ENCODE measurements at regions of chr15 and their contacts with region 1.

Region 1: DNA sequence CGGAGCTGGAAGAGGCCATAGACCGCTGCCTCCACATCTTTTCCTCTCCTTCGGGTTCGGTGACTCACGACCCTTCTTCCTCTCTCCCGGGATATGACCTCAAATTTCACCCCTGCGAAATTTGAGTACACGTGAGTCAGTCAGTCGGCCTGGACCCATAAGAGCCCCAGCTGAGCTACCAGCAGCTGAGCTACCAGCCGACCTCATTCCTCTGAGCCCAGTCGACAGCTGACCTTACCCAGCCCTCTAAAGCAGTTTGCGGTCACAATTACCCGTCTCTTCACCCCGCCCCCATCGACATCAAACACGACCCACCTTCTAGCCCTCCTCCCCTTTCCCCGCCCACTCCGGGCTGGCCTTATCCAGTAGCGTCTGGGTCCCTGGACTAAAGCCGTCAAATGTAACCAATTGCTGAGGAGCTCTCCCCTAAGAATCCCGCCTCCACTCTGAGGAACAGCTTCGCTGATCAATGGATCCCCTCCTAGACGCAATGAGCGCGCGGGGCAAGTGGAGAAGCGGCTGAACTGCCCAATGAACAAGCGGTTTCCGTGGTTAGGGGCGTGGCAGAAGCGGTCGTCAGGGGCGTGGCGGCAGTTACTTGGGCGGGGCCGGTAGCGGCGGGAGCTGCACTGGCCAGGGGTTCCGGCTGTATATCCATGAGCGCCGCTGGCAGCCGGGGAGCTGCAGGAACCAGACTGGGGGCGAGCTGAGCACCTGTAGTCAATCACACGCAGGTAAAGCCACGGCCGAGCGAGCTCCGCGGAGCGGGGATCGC is at the start of gene ABHD2:
- DNase-seq: peak; percentile 98 to 99
- H3K4me3 ChIP-seq: peak within 1 kb of the TSS; percentile 79
- H3K27ac ChIP-seq: peak within 1 kb of the TSS; percentile 63
- H3K4me1 ChIP-seq: peaks cover 43% of the 10 kb centered on the region
- H3K27me3 ChIP-seq: no peaks in the 10 kb centered on the region
- CTCF ChIP-seq: no peak
- total RNA-seq, gene ABHD2: 86.8 and 148 TPM in 2 replicates

Region 2: GRCh38 chr15:88904624-88905327 is 183.2 kb before region 1 on chr15:
- CTCF ChIA-PET with region 1: no interaction called
- POLR2A ChIA-PET with region 1: no interaction called
- intact Hi-C with region 1: no loop called
- DNase-seq: peak; percentile 36 to 75
- H3K4me3 ChIP-seq: no peak overlapping the region
- H3K27ac ChIP-seq: no peak overlapping the region
- H3K4me1 ChIP-seq: 0 out of 2 replicates have a peak, but pooled peaks cover 3% of the 10 kb centered on the region
- H3K27me3 ChIP-seq: no peaks in the 10 kb centered on the region
- CTCF ChIP-seq: peak; percentile 95

Region 3: DNA sequence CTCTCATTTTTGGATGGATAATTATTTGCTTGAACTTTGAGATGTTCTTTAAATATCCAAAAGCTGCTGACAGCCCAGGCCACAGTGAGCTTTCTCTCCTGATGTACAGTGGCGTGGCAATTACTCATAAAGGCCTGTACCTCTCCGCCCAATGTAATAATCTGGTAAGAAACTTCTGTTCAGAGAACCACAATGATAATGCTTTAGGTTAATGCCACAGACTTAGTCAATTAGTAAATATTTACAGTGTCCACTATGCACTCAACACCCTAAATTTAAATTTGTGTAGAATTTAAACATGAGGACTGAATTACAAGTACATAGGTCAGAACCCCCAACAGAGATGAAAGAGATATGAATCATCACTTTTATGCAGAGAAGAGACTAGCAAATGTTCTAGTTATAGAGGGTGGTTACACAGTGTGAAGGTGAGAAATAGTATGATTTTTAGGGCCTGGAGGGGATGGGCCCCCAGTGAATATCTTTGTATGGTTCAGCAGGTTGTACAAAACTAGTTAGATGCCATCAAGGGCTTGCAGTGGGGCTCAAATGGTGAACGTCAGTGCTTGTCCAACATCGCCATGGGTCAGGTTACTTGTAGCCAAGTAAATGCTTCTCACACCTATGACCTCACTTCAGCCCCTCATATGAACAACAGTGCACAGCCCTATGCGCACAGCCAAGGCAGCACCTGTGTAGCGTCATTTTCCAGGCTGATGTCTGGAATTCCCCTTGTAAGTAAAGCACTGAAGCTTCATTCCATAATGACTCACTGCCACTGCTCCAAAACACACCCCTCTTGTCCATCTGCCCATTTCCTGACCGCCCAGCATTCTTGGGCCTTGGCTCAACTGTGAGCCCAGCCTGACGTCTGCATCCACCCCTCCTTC is 13.5 kb after region 1 on chr15:
- CTCF ChIA-PET with region 1: interaction called, 3 read pairs
- POLR2A ChIA-PET with region 1: interaction called, 4 read pairs
- intact Hi-C with region 1: loop called (anchors 1 kb)
- DNase-seq: peak; percentile 83 to 98
- H3K4me3 ChIP-seq: peak overlapping the region; percentile 9; the same call in 1 of the 2 replicates
- H3K27ac ChIP-seq: peak overlapping the region; percentile 95
- H3K4me1 ChIP-seq: peaks cover 86% of the 10 kb centered on the region
- H3K27me3 ChIP-seq: no peaks in the 10 kb centered on the region
- CTCF ChIP-seq: no peak

Region 4: DNA sequence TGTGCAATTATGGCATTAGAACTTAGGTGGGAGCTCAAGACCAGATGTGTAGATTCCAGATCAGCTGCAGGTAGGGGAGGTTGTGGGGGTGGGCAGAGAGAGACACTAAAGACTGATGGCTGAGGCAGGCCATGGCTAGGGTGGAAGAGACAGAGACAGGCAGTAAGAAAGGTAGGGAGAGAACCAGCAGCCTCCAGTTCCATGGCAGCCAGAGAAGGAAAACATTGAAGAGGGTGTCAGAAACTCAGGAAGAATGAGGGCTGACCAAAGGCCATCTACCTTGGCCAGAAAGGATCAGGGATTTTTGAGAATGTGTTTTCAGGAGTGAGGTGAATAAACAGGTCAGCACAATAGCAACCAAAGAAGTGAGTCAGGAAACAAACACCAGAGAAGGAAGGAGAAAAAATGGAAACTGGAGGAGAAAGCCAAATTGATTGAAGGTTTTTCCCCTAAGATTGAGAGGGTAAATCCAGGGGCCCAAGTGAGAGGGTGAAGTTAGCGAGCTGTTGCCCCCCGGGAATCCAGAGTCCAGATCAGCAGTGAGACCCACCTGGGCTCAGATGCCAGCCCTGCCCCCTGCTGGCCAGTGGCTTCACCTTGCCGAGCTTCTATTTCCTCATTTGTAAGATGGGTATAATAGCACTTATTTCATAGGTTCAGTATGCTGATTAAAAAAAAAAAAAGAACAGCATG is 41.3 kb after region 1 on chr15:
- CTCF ChIA-PET with region 1: interaction called, 6 read pairs
- POLR2A ChIA-PET with region 1: interaction called, 3 read pairs
- intact Hi-C with region 1: loop called (anchors 5 kb)
- DNase-seq: peak in 1 of 2 experiments; percentile 54
- H3K4me3 ChIP-seq: no peak overlapping the region
- H3K27ac ChIP-seq: peak overlapping the region; percentile 40
- H3K4me1 ChIP-seq: peaks cover 51% of the 10 kb centered on the region
- H3K27me3 ChIP-seq: no peaks in the 10 kb centered on the region
- CTCF ChIP-seq: peak; percentile 81

Region 5: DNA sequence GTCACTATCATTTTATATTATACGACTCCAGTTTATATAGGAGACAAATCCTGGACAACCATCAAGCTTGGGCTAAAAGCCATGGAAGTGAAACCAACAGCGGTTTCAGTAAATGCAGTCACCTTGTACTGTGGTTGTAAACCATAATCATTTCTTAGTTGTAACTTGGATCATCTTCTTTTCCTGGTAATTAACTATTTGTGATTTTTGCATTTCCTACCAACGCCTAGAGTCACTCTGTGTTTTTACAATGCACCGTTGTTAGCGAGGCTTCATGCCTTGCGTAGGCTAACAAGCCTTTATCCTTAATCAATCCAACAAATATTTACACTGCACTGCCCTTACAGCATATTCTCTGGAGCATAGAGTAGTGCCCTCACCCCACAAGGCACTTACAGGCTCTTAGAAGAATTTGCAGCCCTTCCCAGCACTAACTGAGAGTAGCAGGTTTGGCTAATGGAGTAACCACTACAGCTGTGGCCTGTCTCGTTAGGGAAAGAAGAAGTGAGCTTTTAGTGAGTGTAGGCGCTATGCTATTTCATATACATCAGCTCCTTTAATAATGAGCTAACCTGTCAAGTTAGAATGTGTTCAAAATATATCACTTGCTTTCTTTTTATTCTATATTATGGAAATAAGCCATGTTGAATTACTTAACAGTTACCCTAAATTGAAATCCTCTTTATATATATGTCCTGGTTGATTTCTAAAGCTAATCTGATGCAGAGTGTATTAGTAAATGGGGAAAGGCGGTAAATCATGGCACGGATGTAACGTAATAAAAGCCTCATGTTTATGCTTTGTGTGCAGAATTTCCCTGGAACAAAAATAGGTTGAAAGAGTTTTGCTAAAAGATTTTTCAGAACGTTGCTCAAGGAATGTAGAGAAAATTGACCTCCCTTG is 63.0 kb after region 1 on chr15:
- CTCF ChIA-PET with region 1: no interaction called
- POLR2A ChIA-PET with region 1: no interaction called
- intact Hi-C with region 1: no loop called
- DNase-seq: no peak
- H3K4me3 ChIP-seq: no peak overlapping the region
- H3K27ac ChIP-seq: no peak overlapping the region
- H3K4me1 ChIP-seq: no peaks in the 10 kb centered on the region
- H3K27me3 ChIP-seq: no peaks in the 10 kb centered on the region
- CTCF ChIP-seq: no peak

Region 6: GRCh38 chr15:89171136-89172072 is 83.4 kb after region 1 on chr15:
- CTCF ChIA-PET with region 1: no interaction called
- POLR2A ChIA-PET with region 1: interaction called, 16 read pairs
- intact Hi-C with region 1: loop called (anchors 1 kb)
- DNase-seq: peak; percentile 43 to 52
- H3K4me3 ChIP-seq: no peak overlapping the region
- H3K27ac ChIP-seq: no peak overlapping the region
- H3K4me1 ChIP-seq: peaks cover 23% of the 10 kb centered on the region
- H3K27me3 ChIP-seq: no peaks in the 10 kb centered on the region
- CTCF ChIP-seq: peak; percentile 84

Region 7: DNA sequence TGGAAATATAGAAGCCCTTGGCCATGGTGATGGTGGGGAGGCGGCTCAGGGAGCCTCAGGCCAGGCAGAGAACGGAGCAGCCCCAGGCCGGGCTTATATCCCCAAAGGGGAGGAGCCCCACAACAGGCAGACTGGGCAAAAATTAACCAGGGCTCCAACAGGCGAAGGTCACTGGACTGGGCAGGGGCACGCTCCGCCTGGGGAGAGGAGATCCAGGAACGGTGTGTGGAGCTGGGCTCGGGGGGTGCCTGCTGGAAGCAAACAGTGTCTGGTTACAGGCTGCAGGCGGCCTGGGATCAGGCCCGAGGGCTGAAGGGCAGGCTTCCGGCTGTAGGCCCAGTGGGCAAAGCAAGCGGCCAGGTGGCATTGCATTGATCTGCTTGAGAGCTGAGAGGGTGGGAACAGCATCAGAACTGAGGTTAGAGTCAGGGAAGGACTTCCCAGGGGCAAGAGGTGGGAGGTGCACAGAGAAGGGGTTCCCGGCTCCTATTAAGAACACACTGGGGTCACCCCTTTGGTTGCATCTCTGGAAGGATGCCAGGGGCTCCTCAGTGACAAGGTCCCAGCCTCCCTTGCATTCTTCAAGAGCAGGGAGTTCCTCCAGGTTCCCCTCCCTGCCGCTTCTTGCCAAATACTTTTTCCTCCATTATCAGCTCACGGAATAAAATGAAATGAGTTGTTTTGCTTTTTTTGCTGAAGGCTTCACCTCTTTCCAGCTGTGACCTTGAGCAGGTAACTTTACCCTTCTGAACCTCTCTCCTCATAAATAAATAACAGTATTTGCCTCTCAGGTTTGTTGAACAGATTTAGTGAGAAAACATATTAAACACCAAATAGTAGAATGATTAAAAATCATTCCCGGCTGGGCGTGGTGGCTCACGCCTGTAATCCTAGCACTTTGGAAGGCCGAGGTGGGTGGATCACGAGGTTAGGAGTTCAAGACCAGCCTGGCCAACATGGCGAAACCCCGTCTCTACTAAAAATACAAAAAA is 718.8 kb after region 1 on chr15:
- CTCF ChIA-PET with region 1: no interaction called
- POLR2A ChIA-PET with region 1: no interaction called
- intact Hi-C with region 1: no loop called
- DNase-seq: no peak
- H3K4me3 ChIP-seq: no peak overlapping the region
- H3K27ac ChIP-seq: no peak overlapping the region
- H3K4me1 ChIP-seq: peaks cover 22% of the 10 kb centered on the region; the same call in 1 of the 2 replicates
- H3K27me3 ChIP-seq: no peaks in the 10 kb centered on the region
- CTCF ChIP-seq: no peak

Measured in PC-9 (cell line).